ENCODE measurements at regions of chr2 and their contacts with region 1.

Region 1: GRCh38 chr2:214497489-214497888 is 86.6 kb downstream of the VWC2L start:
- DNase-seq: no peak
- ATAC-seq: no peak
- H3K4me3 ChIP-seq: no peak overlapping the region
- H3K4me3 Mint-ChIP-seq: no peak overlapping the region
- H3K27ac ChIP-seq: no peak overlapping the region
- H3K27ac Mint-ChIP-seq: no peak overlapping the region
- H3K4me1 ChIP-seq: no peaks in the 10 kb centered on the region
- H3K4me1 Mint-ChIP-seq: no peaks in the 10 kb centered on the region
- H3K27me3 ChIP-seq: no peaks in the 10 kb centered on the region
- H3K27me3 Mint-ChIP-seq: no peaks in the 10 kb centered on the region
- CTCF ChIP-seq: no peak

Region 2: GRCh38 chr2:213261771-213262170 is 1235.7 kb before region 1 on chr2:
- CTCF ChIA-PET with region 1: no interaction called
- POLR2A ChIA-PET with region 1: no interaction called
- intact Hi-C with region 1: no loop called
- DNase-seq: no peak
- ATAC-seq: no peak
- H3K4me3 ChIP-seq: no peak overlapping the region
- H3K4me3 Mint-ChIP-seq: no peak overlapping the region
- H3K27ac ChIP-seq: no peak overlapping the region
- H3K27ac Mint-ChIP-seq: no peak overlapping the region
- H3K4me1 ChIP-seq: no peaks in the 10 kb centered on the region
- H3K4me1 Mint-ChIP-seq: no peaks in the 10 kb centered on the region
- H3K27me3 ChIP-seq: no peaks in the 10 kb centered on the region
- H3K27me3 Mint-ChIP-seq: no peaks in the 10 kb centered on the region
- CTCF ChIP-seq: no peak

Region 3: DNA sequence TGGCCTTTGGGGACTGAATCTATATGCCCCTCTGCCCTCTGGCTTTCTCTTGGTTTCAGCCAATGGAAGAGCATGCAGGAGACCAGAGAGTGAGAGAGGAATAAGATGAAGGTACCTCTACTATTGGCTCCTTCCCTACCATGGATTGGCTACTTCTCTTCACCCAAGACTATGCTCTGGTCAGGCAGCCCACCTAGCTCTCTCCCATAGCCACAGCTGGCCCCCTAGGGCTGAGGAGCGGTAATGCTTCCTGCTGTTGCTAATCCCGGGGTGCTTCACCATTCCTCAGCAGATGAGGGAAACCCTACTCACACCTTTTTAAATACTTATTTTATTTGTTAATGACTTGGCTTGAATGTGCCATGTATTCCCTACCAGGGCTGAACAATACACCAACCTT is 1373.5 kb after region 1 on chr2:
- CTCF ChIA-PET with region 1: no interaction called
- POLR2A ChIA-PET with region 1: no interaction called
- intact Hi-C with region 1: loop called in 1 of 2 experiments (anchors 5 kb)
- DNase-seq: no peak
- ATAC-seq: no peak
- H3K4me3 ChIP-seq: no peak overlapping the region
- H3K4me3 Mint-ChIP-seq: no peak overlapping the region
- H3K27ac ChIP-seq: no peak overlapping the region
- H3K27ac Mint-ChIP-seq: no peak overlapping the region
- H3K4me1 ChIP-seq: no peaks in the 10 kb centered on the region
- H3K4me1 Mint-ChIP-seq: no peaks in the 10 kb centered on the region
- H3K27me3 ChIP-seq: peaks cover 5 to 7% of the 10 kb centered on the region in 2 experiments
- H3K27me3 Mint-ChIP-seq: no peaks in the 10 kb centered on the region
- CTCF ChIP-seq: no peak

Measured in CD4-positive, alpha-beta T cell (primary cell).